Activated B cell treated with CpG ODN at 0.5 μM for 24 hours (primary cell): ENCODE measurements at regions of chr11 and their contacts with region 1.

Region 1: DNA sequence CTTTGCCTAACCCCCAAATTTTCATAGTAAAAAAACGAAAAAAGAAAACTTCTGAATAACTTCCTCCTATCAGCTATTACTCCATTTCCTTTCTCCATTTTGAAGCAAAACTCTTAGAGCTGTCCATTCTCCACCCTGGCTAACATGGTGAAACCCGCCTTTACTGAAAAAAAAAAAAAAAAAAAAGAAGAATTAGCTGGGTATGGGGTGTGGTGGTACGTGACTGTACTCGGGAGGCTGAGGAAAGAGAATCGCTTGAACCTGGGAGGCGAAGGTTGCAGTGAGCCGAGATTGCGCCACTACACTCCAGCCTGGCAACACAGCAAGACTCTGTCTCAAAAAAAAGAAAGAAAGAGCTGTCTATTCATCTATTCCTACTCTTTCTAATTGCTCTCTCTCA is 11.3 kb upstream of the NXF1 start:
- DNase-seq: no peak
- ATAC-seq: no peak
- H3K4me3 Mint-ChIP-seq: no peak overlapping the region
- H3K27ac Mint-ChIP-seq: no peak overlapping the region
- H3K4me1 Mint-ChIP-seq: no peaks in the 10 kb centered on the region
- H3K27me3 Mint-ChIP-seq: no peaks in the 10 kb centered on the region
- CTCF ChIP-seq: no peak

Region 2: GRCh38 chr11:63813035-63813562 is 996.5 kb after region 1 on chr11 and contains the start of gene SPINDOC:
- CTCF ChIA-PET with region 1: no interaction called
- POLR2A ChIA-PET with region 1: interaction called, 11 read pairs
- intact Hi-C with region 1: no loop called
- DNase-seq: peak; percentile 77
- ATAC-seq: peak; percentile 94
- H3K4me3 Mint-ChIP-seq: peak within 1 kb of the TSS; percentile 85
- H3K27ac Mint-ChIP-seq: no peak within 1 kb of the TSS
- H3K4me1 Mint-ChIP-seq: peaks cover 21% of the 10 kb centered on the region
- H3K27me3 Mint-ChIP-seq: no peaks in the 10 kb centered on the region
- CTCF ChIP-seq: no peak
- total RNA-seq, gene SPINDOC: 18.7 and 20.8 TPM in 2 replicates